ENCODE measurements at regions of chr6 and their contacts with region 1.

Region 1: GRCh38 chr6:160154471-160154870 is 32.9 kb downstream of the SLC22A1 start:
- DNase-seq: no peak
- ATAC-seq: no peak
- H3K4me3 ChIP-seq: no peak overlapping the region
- H3K27ac ChIP-seq: no peak overlapping the region
- H3K4me1 ChIP-seq: no peaks in the 10 kb centered on the region
- H3K27me3 ChIP-seq: no peaks in the 10 kb centered on the region

Region 2: DNA sequence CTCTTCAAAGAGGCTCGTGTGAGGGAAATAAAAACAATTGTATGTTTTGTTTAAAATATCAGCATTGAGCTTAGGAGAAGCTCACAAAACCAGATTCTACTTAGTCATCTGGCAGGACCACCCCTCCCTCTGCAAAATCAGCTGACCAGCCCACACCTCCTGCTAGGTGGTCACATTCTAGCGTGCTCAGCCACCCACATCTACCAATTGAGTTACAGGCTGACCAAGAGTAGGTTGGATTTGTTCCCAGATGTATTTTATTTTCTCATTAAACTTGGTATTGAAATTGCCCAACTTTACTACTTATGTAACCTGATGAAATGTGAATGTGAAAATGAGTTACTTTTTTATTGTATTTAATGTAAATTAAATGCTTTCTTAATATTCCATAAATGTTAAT is 47.9 kb after region 1 on chr6:
- intact Hi-C with region 1: loop called in 1 of 2 experiments (anchors 5 kb)
- DNase-seq: no peak
- ATAC-seq: no peak
- H3K4me3 ChIP-seq: no peak overlapping the region
- H3K27ac ChIP-seq: no peak overlapping the region
- H3K4me1 ChIP-seq: no peaks in the 10 kb centered on the region
- H3K27me3 ChIP-seq: no peaks in the 10 kb centered on the region

Measured in aorta (tissue), 5 donors.